ENCODE measurements at regions of chr2 and their contacts with region 1.

Region 1: GRCh38 chr2:69724540-69725159 is 17.3 kb upstream of the ANXA4 start:
- DNase-seq: peak; percentile 92
- ATAC-seq: peak; percentile 91
- H3K4me3 Mint-ChIP-seq: peak overlapping the region; percentile 64
- H3K27ac Mint-ChIP-seq: no peak overlapping the region
- H3K4me1 Mint-ChIP-seq: peaks cover 6% of the 10 kb centered on the region
- H3K27me3 Mint-ChIP-seq: no peaks in the 10 kb centered on the region
- CTCF ChIP-seq: peak; percentile 97

Region 2: GRCh38 chr2:69559442-69560146 is 165.1 kb before region 1 on chr2:
- CTCF ChIA-PET with region 1: interaction called, 76 read pairs
- POLR2A ChIA-PET with region 1: no interaction called
- intact Hi-C with region 1: no loop called
- DNase-seq: peak; percentile 33
- ATAC-seq: peak; percentile 84
- H3K4me3 Mint-ChIP-seq: no peak overlapping the region
- H3K27ac Mint-ChIP-seq: peak overlapping the region; percentile 67
- H3K4me1 Mint-ChIP-seq: peaks cover 75% of the 10 kb centered on the region
- H3K27me3 Mint-ChIP-seq: no peaks in the 10 kb centered on the region
- CTCF ChIP-seq: peak; percentile 72

Region 3: GRCh38 chr2:69704446-69704845 is 20.2 kb before region 1 on chr2:
- CTCF ChIA-PET with region 1: interaction called, 12 read pairs
- POLR2A ChIA-PET with region 1: no interaction called
- intact Hi-C with region 1: no loop called
- DNase-seq: no peak
- ATAC-seq: no peak
- H3K4me3 Mint-ChIP-seq: no peak overlapping the region
- H3K27ac Mint-ChIP-seq: no peak overlapping the region
- H3K4me1 Mint-ChIP-seq: peaks cover 9% of the 10 kb centered on the region
- H3K27me3 Mint-ChIP-seq: no peaks in the 10 kb centered on the region
- CTCF ChIP-seq: no peak

Region 4: GRCh38 chr2:69770193-69771146 is 45.8 kb after region 1 on chr2:
- CTCF ChIA-PET with region 1: interaction called, 23 read pairs
- POLR2A ChIA-PET with region 1: interaction called, 6 read pairs
- intact Hi-C with region 1: no loop called
- DNase-seq: peak; percentile 49
- ATAC-seq: peak; percentile 37
- H3K4me3 Mint-ChIP-seq: no peak overlapping the region
- H3K27ac Mint-ChIP-seq: peak overlapping the region; percentile 79
- H3K4me1 Mint-ChIP-seq: peaks cover 60% of the 10 kb centered on the region
- H3K27me3 Mint-ChIP-seq: no peaks in the 10 kb centered on the region
- CTCF ChIP-seq: no peak

Region 5: DNA sequence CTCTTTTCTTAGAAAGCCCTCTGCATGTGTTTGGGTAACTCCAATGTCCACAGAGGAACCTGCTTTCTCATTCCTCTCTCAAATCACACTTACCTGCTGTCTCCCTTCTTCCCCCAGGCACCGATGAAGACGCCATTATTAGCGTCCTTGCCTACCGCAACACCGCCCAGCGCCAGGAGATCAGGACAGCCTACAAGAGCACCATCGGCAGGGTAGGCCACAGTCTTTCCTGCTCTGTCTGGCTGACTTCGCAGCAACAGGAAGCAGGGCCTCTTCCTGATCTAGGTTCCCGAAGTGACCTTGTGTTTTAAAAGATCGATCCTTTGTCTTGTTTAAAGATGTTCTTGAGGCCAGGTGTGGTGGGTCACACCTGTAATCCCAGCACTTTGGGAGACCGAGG is 79.8 kb after region 1 on chr2:
- CTCF ChIA-PET with region 1: interaction called, 87 read pairs
- POLR2A ChIA-PET with region 1: interaction called, 3 read pairs
- intact Hi-C with region 1: no loop called
- DNase-seq: no peak
- ATAC-seq: no peak
- H3K4me3 Mint-ChIP-seq: no peak overlapping the region
- H3K27ac Mint-ChIP-seq: no peak overlapping the region
- H3K4me1 Mint-ChIP-seq: peaks cover 6% of the 10 kb centered on the region
- H3K27me3 Mint-ChIP-seq: peaks cover 3% of the 10 kb centered on the region
- CTCF ChIP-seq: no peak

Region 6: DNA sequence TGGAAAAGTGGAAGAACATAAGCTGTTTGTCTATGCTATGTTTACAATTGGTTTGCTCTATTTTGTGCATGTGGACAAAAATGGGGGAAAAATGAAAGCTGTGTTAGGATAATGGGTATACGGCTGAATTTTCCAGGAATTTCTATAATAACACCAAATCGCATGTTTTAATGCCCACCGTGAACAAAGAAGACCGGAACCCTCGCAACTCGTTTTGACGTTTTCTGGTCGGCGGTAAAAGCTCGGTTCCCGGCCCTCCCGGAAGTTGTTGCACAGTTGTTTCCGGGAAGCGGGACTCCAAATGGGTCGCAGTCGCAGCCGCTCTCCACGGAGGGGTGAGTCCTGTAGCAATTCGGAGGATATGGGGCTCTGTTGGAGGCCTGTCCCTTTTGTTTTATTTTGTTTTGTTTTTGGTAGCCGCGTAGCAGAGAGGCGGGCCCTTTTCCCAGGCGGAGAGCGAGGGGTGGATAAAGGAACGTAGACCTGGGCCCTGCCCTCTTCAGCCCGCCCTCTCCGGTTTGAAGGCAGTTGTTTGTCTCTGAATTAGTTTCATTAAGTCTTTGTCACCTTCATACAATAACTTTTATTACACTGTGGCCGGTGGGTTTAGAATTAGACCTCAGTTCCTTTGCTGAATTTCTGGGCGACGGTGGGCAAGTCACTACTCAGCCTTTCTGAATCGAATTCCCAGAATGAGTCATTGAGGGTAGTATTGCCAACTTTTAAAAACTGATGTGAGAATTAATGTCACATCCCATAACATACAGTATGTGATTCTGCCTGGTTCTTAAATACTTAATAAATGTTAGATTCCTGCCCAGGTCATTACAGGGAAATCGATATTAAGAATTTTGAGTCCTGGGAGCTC is 169.3 kb after region 1 on chr2 and contains the start of gene SNRNP27:
- CTCF ChIA-PET with region 1: interaction called, 14 read pairs
- POLR2A ChIA-PET with region 1: no interaction called
- intact Hi-C with region 1: no loop called
- DNase-seq: peak; percentile 87
- ATAC-seq: peak; percentile 92
- H3K4me3 Mint-ChIP-seq: peak within 1 kb of the TSS; percentile 99
- H3K27ac Mint-ChIP-seq: peak within 1 kb of the TSS; percentile 98
- H3K4me1 Mint-ChIP-seq: peaks cover 34% of the 10 kb centered on the region
- H3K27me3 Mint-ChIP-seq: no peaks in the 10 kb centered on the region
- CTCF ChIP-seq: no peak
- total RNA-seq, gene SNRNP27: 54.3 to 57.9 TPM

Measured in activated CD8-positive, alpha-beta T cell treated with anti-CD3 and anti-CD28 coated beads for 36 hours (primary cell).